PC-9 (cell line): ENCODE measurements at regions of chr1 and their contacts with region 1.

Region 1: GRCh38 chr1:25997828-25998761 is at the start of gene PAFAH2:
- DNase-seq: peak; percentile 91
- H3K4me3 ChIP-seq: peak within 1 kb of the TSS; percentile 69
- H3K27ac ChIP-seq: 0 out of 2 replicates have a peak within 1 kb of the TSS, but pooled peaks have one; percentile 1
- H3K4me1 ChIP-seq: peaks cover 12% of the 10 kb centered on the region
- H3K27me3 ChIP-seq: no peaks in the 10 kb centered on the region
- CTCF ChIP-seq: peak; percentile 85
- total RNA-seq, gene PAFAH2: 13.0 and 13.9 TPM in 2 replicates

Region 2: GRCh38 chr1:25810341-25811299 is 187.5 kb before region 1 on chr1:
- CTCF ChIA-PET with region 1: interaction called, 3 read pairs
- POLR2A ChIA-PET with region 1: interaction called, 11 read pairs
- intact Hi-C with region 1: no loop called
- DNase-seq: peak in 1 of 2 experiments; percentile 71
- H3K4me3 ChIP-seq: no peak overlapping the region
- H3K27ac ChIP-seq: no peak overlapping the region
- H3K4me1 ChIP-seq: no peaks in the 10 kb centered on the region
- H3K27me3 ChIP-seq: no peaks in the 10 kb centered on the region
- CTCF ChIP-seq: peak; percentile 89

Region 3: DNA sequence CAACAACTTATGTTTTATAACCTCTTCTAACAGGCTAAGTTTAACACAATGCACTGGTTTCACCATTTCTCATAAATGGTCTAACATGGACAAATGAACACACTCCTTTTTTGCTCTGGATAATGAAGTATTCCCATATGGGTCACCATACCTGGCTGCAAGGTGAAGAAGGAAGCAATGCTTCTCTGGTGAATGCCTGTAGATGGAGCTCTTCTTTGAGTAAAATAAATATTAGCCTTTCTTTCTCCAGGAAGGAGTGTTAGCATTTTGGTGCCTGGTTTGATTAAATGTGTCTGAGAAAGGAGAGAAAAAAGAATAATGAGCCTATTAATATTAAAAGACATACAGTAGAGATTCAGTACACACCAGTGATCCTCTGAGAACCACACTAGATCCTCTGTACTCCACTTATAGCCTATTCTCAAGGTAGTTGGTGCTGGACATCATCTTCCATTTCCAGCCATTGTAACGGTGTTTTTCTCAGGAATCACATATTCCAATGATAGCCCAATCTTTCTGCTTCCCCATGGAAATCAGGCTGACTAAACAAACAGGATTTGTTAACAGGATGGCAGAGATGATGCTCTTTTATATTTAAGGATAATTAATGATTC is 160.7 kb before region 1 on chr1:
- CTCF ChIA-PET with region 1: interaction called, 10 read pairs
- POLR2A ChIA-PET with region 1: no interaction called
- intact Hi-C with region 1: loop called (anchors 1 kb)
- DNase-seq: no peak
- H3K4me3 ChIP-seq: no peak overlapping the region
- H3K27ac ChIP-seq: 0 out of 2 replicates have a peak overlapping the region, but pooled peaks have one; percentile 12
- H3K4me1 ChIP-seq: no peaks in the 10 kb centered on the region
- H3K27me3 ChIP-seq: no peaks in the 10 kb centered on the region
- CTCF ChIP-seq: peak; percentile 59

Region 4: DNA sequence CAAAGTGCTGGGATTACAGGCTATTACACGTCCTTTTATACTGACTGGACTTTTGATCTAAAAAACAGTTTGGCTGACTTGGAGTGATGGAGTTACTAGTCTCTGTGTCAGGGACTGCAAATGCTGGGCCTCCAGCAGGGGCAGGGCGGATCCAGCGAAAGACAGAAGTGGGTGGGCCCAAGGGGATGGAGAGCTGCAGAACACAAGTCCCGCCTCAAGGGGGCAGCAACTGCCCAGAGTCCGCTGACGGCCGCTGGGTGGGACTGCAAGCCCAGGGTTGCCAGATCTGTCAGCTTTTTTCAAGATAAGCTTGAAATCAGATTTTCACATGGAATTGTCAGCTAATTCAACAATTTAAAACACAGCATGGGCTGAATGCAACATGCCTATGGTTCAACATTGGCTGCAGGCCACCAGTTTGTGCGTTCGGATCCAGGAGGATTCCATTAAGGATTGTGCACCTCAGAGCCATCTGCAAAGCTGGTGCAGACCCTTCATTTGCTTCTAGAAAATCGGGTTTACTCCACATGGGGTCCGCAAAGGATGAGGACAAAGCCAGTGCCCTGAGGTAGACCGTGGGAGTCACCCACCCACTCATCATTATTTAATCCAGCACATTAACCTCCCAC is 102.6 kb before region 1 on chr1:
- CTCF ChIA-PET with region 1: interaction called, 25 read pairs
- POLR2A ChIA-PET with region 1: interaction called, 7 read pairs
- intact Hi-C with region 1: loop called (anchors 1 kb)
- DNase-seq: peak; percentile 61 to 86
- H3K4me3 ChIP-seq: no peak overlapping the region
- H3K27ac ChIP-seq: no peak overlapping the region
- H3K4me1 ChIP-seq: peaks cover 33% of the 10 kb centered on the region
- H3K27me3 ChIP-seq: no peaks in the 10 kb centered on the region
- CTCF ChIP-seq: peak; percentile 86

Region 5: DNA sequence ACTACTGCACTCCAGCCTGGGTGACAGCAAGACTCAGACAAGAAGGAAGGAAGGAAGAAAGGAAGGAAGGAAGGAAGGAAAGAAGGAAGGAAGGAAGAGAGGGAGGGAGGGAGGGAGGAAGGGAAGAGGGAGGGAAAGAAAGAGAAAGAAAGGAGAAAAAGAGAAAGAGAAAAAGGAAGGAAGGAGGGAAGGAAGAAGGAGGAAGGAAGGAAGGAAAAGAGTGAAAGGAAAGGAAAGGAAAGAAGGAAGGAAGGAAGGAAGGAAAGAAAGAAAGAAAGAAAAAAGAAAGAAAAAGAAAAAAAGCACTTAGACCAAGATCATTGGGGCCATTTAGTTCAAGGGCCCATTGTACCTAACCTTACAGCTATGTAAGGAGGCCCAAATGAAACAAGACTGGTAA is 42.5 kb before region 1 on chr1:
- CTCF ChIA-PET with region 1: interaction called, 11 read pairs
- POLR2A ChIA-PET with region 1: no interaction called
- intact Hi-C with region 1: no loop called
- DNase-seq: no peak
- H3K4me3 ChIP-seq: no peak overlapping the region
- H3K27ac ChIP-seq: no peak overlapping the region
- H3K4me1 ChIP-seq: no peaks in the 10 kb centered on the region
- H3K27me3 ChIP-seq: no peaks in the 10 kb centered on the region
- CTCF ChIP-seq: no peak

Region 6: DNA sequence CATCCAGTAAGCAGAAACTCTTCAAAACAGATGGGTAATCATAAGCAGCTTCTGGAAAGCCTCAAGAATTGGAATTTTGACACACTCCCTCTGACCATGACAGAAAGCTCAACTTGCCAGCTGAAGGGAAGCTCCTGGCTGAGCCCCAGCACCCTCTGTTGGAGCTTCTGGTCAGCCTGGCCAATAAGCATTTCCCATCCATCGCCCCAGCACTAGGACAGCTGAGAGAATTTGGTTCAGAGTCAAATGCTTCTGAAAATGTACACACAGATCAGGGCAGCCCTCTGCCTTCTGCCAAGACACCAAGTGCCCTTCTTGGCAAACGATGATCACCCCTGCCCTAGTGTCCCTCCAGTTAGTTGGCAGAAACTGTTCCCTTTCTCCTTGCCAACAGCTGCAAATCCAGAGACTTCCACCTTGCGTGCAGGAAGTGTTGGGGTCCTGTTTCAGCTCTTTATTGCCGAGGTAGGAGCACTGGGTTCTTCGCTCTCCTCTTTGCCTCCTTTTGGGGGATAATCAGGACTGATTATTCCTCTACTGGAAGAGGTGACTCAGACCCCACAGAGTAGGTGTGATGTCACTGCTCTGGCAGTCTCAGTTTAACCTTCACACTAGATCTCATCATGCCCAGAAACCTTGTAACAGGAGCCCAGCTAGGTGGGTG is 801.5 kb after region 1 on chr1:
- CTCF ChIA-PET with region 1: no interaction called
- POLR2A ChIA-PET with region 1: interaction called, 18 read pairs
- intact Hi-C with region 1: no loop called
- DNase-seq: peak; percentile 59 to 88
- H3K4me3 ChIP-seq: peak overlapping the region; percentile 37; the same call in 1 of the 2 replicates
- H3K27ac ChIP-seq: peak overlapping the region; percentile 97
- H3K4me1 ChIP-seq: peaks cover 33% of the 10 kb centered on the region
- H3K27me3 ChIP-seq: no peaks in the 10 kb centered on the region
- CTCF ChIP-seq: no peak